PC-3 (cell line): ENCODE measurements at regions of chr17 and their contacts with region 1.

Region 1: DNA sequence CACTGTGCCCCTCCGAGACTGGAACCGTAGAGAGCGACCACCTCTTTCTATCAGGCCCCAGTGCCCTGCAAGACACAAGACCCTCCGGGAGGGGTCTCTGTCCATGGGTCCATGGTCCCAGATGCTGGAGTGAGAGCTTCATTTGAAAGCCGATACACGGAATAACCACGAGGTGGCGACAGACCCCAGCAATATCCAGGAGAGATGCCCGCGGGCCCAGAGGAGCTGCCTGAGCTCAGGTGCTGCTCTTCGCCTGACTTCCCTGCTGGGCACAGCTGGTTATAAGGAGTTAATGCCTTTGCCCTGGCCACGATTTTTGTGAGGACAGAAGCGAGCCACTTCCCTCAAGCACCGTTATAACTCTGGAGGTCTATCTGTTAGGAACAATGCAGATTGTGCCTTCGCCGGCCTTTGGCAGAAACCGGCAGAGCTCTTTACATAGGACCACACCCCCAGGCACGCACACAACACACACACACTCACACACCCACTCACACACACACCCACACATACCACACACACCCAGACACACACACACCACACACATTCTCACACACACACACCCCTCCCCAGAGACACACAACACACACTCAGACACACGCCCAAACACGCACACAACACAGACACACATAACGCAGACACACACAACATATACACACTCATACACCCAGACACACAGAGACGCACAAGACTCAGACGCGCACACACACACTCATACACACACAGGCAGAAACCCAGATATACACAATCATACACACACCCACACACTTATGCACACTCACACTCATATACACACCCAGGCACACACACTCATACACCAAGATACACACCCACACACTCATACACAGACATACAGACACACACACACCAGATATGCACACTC is 436.4 kb downstream of the SOX9 start:
- DNase-seq: peak; percentile 89
- ATAC-seq: peak; percentile 48
- H3K4me3 ChIP-seq: no peak overlapping the region
- H3K27ac ChIP-seq: no peak overlapping the region
- H3K4me1 ChIP-seq: peaks cover 20% of the 10 kb centered on the region
- H3K27me3 ChIP-seq: no peaks in the 10 kb centered on the region
- CTCF ChIP-seq: peak; percentile 98

Region 2: DNA sequence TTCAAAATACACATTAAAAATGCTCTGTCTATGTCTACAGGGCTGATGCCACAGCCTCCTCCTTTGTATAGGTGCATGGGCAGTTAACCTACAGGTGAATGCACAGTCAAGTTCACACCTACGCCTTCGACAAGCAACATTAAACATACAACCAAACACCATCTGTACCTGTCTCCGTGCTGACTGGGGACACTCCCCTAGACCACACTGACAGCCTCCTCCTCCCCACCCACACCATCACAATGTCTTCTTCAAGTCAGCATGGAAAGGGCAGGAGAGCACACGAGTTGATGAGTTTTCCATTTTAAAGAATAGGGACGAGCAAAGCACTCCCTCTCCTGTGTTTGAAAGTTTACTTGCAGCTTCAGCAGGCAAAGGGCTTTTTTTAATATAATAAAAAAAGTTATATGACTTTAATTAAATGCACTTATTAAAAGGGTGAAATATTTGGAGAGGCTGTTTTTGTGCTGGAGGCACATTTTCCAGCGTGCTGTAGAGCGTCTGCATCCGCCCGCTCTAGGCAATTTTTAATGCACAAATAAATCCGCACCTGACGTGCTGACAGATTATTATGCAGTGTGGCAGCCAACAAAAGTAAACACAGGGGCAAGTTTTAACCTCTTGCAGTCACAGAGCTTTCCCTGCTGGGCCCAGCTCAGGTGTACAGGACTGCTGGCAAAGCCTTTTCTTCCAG is 68.5 kb before region 1 on chr17:
- CTCF ChIA-PET with region 1: no interaction called
- POLR2A ChIA-PET with region 1: no interaction called
- intact Hi-C with region 1: no loop called
- DNase-seq: no peak
- ATAC-seq: peak; percentile 29; the same call in 1 of the 2 replicates
- H3K4me3 ChIP-seq: no peak overlapping the region
- H3K27ac ChIP-seq: no peak overlapping the region
- H3K4me1 ChIP-seq: no peaks in the 10 kb centered on the region
- H3K27me3 ChIP-seq: no peaks in the 10 kb centered on the region
- CTCF ChIP-seq: no peak

Region 3: DNA sequence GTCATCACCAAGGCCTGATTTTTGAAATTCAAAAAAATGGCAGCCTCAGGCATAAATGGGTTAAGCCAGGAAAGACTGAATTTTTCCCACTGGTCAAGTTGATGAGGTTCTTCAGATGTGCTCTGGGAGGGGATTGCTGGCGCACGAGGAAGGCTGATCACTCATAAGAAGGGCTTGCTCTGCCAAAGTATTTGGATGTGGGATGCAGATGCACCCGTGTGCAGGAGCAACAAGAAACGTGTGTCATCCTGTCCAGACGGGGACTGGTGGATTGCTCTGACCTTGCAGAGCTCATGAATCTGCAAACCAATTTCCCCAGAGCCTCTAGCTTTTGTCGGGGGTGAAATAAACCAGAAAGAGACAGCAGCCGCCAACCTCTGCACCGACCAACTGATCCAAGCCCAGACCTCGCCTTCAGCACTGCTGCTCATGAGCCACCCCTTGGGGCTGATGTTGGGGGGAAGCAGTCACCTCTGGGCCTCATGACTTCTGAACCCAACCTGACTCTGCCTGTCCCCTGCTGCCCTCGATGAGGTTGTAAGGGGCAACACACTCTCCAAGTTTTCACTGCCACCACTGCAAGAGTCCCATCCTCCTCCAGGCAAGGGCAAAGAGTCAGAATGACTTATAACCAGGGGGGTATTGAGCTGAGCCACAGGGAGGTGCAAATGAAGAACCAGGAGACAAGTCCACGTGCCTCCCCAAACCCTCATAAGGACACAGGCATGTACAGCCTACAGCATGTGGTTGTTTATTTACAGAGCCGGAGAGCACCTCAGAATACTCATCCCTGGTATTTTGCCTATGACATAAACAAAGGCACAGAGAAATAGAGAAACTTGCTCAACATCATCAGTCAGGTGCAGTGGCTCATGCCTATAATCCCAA is 15.7 kb after region 1 on chr17:
- CTCF ChIA-PET with region 1: no interaction called
- POLR2A ChIA-PET with region 1: no interaction called
- intact Hi-C with region 1: no loop called
- DNase-seq: no peak
- ATAC-seq: no peak
- H3K4me3 ChIP-seq: no peak overlapping the region
- H3K27ac ChIP-seq: no peak overlapping the region
- H3K4me1 ChIP-seq: no peaks in the 10 kb centered on the region
- H3K27me3 ChIP-seq: no peaks in the 10 kb centered on the region
- CTCF ChIP-seq: no peak

Region 4: DNA sequence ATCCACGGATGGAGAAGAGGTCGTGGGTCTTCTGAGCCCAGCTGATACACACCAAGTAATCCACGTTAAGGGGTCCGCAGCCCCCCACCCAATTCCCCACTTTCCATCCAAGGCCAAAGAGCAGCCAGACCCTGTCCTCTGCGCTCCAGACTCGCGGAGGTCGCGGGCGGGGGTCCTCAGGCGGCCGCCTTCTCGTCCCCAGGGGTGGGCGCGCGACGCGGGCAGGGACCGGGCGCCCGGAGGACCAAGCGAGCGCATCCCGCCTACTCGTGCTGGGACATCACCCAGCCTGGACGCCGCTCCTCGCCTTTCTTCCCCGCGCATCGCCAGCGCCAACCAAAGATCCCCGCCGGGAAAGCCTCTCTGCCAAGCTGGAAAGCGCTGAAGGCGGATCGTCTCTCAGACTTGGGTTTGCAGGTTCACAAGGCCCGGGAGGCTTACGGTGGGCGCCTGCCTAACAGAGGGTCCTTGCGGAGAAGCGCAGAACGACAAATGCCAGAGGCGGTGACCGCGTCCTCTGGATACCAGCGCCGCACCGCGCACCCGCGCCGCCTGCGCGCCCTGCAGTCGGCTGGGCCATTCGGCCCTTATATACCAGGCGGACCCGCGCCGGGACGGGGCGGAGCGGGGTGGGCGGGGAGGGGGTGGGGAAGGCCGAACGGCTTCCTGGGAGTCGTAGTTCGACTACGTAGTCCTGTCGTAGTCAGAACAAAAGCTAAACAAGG is 35.2 kb after region 1 on chr17:
- CTCF ChIA-PET with region 1: interaction called, 9 read pairs
- POLR2A ChIA-PET with region 1: no interaction called
- intact Hi-C with region 1: loop called (anchors 1 kb)
- DNase-seq: peak; percentile 95
- ATAC-seq: peak; percentile 66
- H3K4me3 ChIP-seq: peak overlapping the region; percentile 95
- H3K27ac ChIP-seq: peak overlapping the region; percentile 91
- H3K4me1 ChIP-seq: peaks cover 22% of the 10 kb centered on the region
- H3K27me3 ChIP-seq: no peaks in the 10 kb centered on the region
- CTCF ChIP-seq: no peak

Region 5: DNA sequence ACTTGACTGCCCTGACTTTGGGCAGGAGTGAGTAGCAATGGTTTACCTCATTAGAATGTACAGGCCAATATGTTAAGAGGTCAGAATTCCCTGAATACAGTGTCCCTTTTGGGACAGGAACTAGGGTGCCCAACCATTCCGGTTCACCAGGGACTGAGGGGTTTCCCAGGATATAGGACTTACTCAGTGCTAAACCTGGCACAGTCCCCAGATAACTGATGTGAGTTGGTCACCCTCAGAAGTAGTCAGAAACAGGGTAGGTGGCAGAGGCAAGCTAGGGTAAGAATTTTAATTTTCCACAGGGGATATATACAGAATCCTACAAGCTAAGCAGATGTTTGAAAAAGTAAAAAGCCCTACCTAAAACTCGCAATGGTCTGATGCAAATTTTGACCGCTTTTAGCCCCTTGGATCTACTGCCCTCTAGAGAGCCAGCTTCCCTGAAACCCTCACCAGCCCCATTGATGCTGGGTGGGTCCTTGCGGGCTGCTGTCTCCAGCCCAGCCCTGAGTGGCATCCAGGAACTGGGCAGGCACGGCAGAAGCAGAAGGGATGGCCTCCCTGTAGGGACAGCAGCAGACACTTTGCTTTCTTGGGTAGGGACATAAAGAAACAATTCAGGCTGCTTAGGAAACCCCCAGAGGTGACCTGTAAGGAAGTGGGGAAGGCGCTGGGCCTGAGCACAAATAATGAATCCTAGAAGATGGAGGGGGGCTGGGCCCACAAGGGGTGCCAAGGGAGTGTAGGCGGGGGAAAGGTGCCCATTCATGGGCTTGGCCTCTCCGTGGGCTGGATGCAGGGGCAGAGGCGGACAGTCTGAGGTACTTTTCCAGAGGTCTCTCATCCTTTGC is 100.5 kb after region 1 on chr17:
- CTCF ChIA-PET with region 1: interaction called, 4 read pairs
- POLR2A ChIA-PET with region 1: no interaction called
- intact Hi-C with region 1: loop called (anchors 1 kb)
- DNase-seq: peak; percentile 84
- ATAC-seq: peak; percentile 46
- H3K4me3 ChIP-seq: no peak overlapping the region
- H3K27ac ChIP-seq: peak overlapping the region; percentile 76
- H3K4me1 ChIP-seq: peaks cover 44% of the 10 kb centered on the region
- H3K27me3 ChIP-seq: no peaks in the 10 kb centered on the region
- CTCF ChIP-seq: peak; percentile 47; the same call in 1 of the 2 replicates

Region 6: GRCh38 chr17:72715906-72716572 is 158.9 kb after region 1 on chr17:
- CTCF ChIA-PET with region 1: interaction called, 10 read pairs
- POLR2A ChIA-PET with region 1: no interaction called
- intact Hi-C with region 1: loop called (anchors 2 kb)
- DNase-seq: peak; percentile 99
- ATAC-seq: peak; percentile 95
- H3K4me3 ChIP-seq: no peak overlapping the region
- H3K27ac ChIP-seq: peak overlapping the region; percentile 95
- H3K4me1 ChIP-seq: peaks cover 36% of the 10 kb centered on the region
- H3K27me3 ChIP-seq: no peaks in the 10 kb centered on the region
- CTCF ChIP-seq: no peak

Region 7: GRCh38 chr17:73156166-73156840 is 599.1 kb after region 1 on chr17:
- CTCF ChIA-PET with region 1: interaction called, 16 read pairs
- POLR2A ChIA-PET with region 1: no interaction called
- intact Hi-C with region 1: no loop called
- DNase-seq: peak; percentile 77
- ATAC-seq: peak; percentile 95
- H3K4me3 ChIP-seq: no peak overlapping the region
- H3K27ac ChIP-seq: no peak overlapping the region
- H3K4me1 ChIP-seq: peaks cover 3% of the 10 kb centered on the region; the same call in 1 of the 2 replicates
- H3K27me3 ChIP-seq: 0 out of 2 replicates have a peak, but pooled peaks cover 3% of the 10 kb centered on the region
- CTCF ChIP-seq: peak; percentile 92